Natural killer cell (primary cell): ENCODE measurements at regions of chr6 and their contacts with region 1.

Region 1: DNA sequence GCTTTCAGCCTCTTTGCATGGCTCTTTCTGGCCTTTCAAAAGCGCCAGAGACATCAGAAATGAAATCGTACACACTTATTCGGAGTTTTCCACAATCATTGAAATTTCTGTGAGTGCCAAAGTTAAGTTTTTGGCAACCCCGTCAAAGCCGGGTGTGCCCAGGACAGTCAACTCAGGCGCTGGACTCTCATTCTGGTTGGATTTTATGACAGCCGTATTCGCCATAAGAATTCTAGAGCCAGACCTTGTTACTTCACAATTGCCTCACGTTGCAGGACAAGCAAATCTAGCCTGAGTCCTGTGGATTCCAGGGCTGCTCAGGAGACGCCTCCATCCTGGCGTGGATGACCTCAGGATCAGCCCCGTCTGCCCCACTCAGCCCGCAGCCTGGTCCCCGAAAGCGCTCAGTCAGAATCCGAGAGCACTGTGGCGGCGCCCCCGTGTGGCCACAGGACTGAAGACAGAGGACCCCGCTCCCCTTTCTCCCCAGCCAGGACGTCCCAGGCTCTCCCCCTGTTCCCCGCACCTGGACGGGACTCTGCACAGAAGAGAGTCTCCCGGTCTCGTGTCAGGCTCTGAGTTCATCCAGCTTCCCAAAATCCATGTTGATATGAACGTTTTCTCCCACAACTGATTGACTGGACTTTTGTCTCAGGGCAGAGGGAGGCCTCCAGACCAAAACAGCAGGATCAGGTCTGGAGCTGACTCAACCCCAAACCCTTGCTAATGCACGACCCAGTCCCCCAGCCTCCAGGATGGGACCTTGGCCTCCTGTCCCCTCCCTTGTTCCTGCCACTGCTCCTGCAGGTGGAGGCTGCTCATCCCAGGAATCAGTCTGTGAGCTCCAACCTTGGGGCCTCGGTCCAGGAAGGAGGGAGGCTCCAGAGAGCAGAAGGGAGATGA is 38.2 kb downstream of the MICA start:
- DNase-seq: peak; percentile 78 to 84
- ATAC-seq: peak; percentile 94 to 99 (median 98)
- H3K4me3 ChIP-seq: no peak overlapping the region
- H3K4me3 Mint-ChIP-seq: no peak overlapping the region
- H3K27ac ChIP-seq: no peak overlapping the region
- H3K27ac Mint-ChIP-seq: no peak overlapping the region
- H3K4me1 ChIP-seq: peaks cover 5% of the 10 kb centered on the region
- H3K4me1 Mint-ChIP-seq: peaks cover 12 to 13% of the 10 kb centered on the region in 2 donors
- H3K27me3 ChIP-seq: peaks cover 8% of the 10 kb centered on the region
- H3K27me3 Mint-ChIP-seq: peaks cover 39 to 68% of the 10 kb centered on the region in 2 donors
- CTCF ChIP-seq: peak; percentile 79

Region 2: GRCh38 chr6:31396422-31397152 is 45.0 kb before region 1 on chr6:
- intact Hi-C with region 1: loop called (anchors 1 kb)
- DNase-seq: peak; percentile 80 to 93
- ATAC-seq: peak; percentile 72 to 86 (median 75)
- H3K4me3 ChIP-seq: no peak overlapping the region
- H3K4me3 Mint-ChIP-seq: no peak overlapping the region
- H3K27ac ChIP-seq: no peak overlapping the region
- H3K27ac Mint-ChIP-seq: no peak overlapping the region
- H3K4me1 ChIP-seq: peaks cover 28% of the 10 kb centered on the region
- H3K4me1 Mint-ChIP-seq: peaks cover 27 to 35% of the 10 kb centered on the region in 2 donors
- H3K27me3 ChIP-seq: no peaks in the 10 kb centered on the region
- H3K27me3 Mint-ChIP-seq: no peaks in the 10 kb centered on the region
- CTCF ChIP-seq: peak; percentile 75

Region 3: GRCh38 chr6:31908791-31909190 is 467.2 kb after region 1 on chr6:
- intact Hi-C with region 1: no loop called
- DNase-seq: no peak
- ATAC-seq: no peak
- H3K4me3 ChIP-seq: no peak overlapping the region
- H3K4me3 Mint-ChIP-seq: no peak overlapping the region
- H3K27ac ChIP-seq: no peak overlapping the region
- H3K27ac Mint-ChIP-seq: no peak overlapping the region
- H3K4me1 ChIP-seq: peaks cover 5% of the 10 kb centered on the region
- H3K4me1 Mint-ChIP-seq: no peaks in the 10 kb centered on the region
- H3K27me3 ChIP-seq: no peaks in the 10 kb centered on the region
- H3K27me3 Mint-ChIP-seq: peaks cover 0 to 8% of the 10 kb centered on the region in 2 donors
- CTCF ChIP-seq: no peak